AG04449 (cell line): ENCODE measurements at regions of chr7 and their contacts with region 1.

Region 1: GRCh38 chr7:117385340-117386109 is 41.8 kb downstream of the ASZ1 start:
- DNase-seq: no peak
- H3K4me3 ChIP-seq: no peak overlapping the region
- CTCF ChIP-seq: peak; percentile 11

Region 2: DNA sequence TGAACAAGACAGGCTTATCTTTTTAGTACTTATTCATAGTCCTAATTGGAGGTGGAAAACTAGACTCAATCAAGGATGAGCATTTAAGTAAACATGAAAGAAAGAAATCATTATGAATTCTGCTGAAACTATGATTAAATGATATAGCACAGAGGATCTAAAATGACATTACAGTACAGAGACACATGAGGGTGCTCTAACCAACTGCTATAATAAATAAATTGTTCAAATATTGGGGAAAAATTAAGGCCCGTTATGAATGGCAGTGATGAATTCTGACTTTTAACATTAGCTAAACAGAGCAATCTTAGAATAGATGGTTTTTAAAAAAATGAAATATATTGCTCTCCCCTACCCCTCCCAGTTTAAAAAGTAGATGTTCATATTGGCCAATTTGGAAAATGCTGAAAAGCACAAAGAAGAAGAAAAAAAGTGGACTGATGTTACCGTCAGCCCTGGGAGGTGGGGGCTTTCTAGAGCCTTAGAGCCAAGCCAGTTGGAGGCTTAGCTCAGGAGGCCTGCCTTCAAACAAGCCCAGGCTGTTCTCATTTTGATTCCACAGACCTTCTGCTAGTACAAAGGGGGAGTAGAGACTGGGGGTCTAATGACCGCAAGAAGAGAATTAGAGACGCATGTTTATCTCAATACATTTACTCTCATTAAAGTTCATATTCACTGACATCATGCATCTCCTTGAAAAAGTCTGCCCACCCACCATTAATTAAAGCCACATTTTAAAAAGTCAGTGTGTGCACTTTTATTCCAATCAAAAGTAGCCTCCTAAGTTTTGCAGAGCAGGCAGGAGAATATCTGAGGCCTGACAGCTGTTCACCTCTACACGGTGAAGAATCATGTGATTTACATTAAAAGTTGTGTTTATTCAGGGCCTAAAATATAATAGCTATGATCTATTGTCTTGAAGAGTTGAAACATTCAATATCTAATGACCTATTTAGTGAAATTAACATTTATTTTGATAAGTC is 72.6 kb before region 1 on chr7:
- CTCF ChIA-PET with region 1: interaction called, 11 read pairs
- POLR2A ChIA-PET with region 1: no interaction called
- DNase-seq: no peak
- H3K4me3 ChIP-seq: no peak overlapping the region
- CTCF ChIP-seq: no peak

Region 3: DNA sequence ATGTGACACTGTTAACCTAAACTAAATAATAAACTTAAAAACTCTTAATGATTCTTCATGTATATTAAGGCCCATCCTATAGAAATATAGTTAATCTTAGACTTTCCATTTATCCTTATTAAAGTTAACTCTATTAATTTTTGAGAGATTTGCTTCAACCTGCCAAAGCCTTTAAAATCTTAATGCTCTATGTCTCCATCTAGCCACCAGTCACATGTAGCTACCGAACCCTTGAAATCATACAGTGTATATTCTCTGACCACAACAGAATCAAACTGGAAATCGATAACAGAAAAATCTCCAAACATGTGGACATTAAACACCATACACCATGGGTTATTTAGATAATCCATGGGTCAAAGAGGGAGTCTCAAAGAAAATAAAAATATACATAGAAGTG is 10.1 kb before region 1 on chr7:
- CTCF ChIA-PET with region 1: interaction called, 25 read pairs
- POLR2A ChIA-PET with region 1: no interaction called
- DNase-seq: no peak
- H3K4me3 ChIP-seq: no peak overlapping the region
- CTCF ChIP-seq: no peak

Region 4: DNA sequence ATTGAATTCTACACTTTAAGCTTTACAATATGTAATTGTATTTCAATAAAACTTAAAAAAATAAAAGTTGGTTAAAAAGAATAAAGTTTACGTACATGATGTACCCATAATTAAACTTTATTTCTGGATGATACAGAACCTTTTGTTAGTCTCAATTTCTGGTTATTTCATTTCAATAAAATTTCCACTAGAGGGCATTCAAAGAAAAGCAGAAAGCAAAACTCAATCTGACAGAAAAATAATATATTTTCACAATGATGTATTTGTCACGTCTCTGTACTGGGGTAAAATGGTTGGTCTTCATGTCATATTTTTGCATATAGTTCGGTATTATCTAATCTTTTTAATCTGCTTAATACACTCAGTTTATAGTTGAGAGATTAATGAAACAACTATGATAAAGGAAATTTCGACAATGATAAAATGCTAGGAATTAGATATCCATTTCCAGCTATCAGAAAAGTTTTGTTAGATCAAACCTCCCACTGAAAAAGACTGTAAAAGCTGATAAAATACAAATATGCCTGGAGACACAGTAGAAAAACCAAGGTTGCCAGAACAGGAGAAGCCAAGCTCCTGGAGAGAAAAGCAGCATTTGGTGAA is 14.4 kb after region 1 on chr7:
- CTCF ChIA-PET with region 1: interaction called, 23 read pairs
- POLR2A ChIA-PET with region 1: no interaction called
- DNase-seq: no peak
- H3K4me3 ChIP-seq: no peak overlapping the region
- CTCF ChIP-seq: no peak

Region 5: DNA sequence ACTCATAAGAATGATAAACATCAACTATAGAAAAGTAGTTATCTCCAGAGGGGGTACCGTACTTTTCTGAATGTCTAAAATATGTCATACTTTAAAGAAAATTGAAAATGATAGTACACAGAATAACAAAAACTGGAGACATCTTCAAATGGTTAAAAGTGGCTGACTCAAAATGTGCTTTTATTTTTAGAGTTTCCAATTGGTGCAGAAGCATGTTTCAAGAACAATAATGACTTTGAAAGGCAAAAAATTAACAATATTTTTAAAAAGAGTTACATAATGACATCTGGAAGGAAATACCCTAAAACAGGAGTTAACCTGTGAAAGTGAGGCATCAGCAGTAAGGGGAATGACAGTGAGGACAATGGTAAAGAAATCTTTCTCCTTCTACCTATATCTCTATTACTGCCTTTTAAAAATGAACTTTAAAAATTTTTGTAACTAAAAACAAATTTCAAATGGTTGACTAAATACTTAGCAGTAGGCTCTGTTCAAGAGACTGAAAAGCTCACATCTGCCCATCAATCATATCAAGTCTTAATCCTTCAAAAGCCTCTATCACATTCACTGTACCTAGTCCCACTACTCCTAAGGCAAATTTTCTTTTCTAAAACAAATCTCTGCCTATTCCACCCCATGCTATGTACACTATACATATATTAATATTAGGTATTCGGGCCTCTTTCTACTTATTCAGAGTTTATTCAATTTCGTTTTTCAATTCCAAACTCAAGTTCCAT is 38.7 kb after region 1 on chr7:
- CTCF ChIA-PET with region 1: no interaction called
- POLR2A ChIA-PET with region 1: no interaction called
- DNase-seq: no peak
- H3K4me3 ChIP-seq: no peak overlapping the region
- CTCF ChIP-seq: no peak

Region 6: DNA sequence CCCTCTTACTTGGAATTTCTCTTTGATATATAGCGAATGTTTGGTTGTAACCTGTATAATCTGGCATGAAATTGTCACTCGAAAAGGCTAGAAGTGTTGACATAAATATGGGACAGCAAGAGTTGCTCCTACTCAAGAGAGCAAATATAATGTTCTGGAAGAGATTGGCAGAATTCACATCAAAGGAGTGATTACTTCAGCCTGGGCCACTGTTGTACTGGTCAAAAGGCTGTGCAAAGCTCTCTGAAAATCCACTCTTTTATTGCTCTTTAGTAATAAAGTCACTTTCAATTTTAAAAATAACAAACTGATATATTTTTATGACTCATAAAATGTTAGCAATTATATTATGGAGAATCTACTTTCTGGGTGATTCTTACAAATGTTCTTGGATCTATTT is 152.5 kb after region 1 on chr7:
- CTCF ChIA-PET with region 1: no interaction called
- POLR2A ChIA-PET with region 1: no interaction called
- DNase-seq: no peak
- H3K4me3 ChIP-seq: no peak overlapping the region
- CTCF ChIP-seq: no peak